T-cell (primary cell): ENCODE measurements at regions of chr1 and their contacts with region 1.

Region 1: GRCh38 chr1:225441314-225442122 is 13.7 kb upstream of the LBR start:
- DNase-seq: no peak
- ATAC-seq: no peak
- H3K4me3 ChIP-seq: peak overlapping the region in 1 of 2 donors; percentile 2
- H3K4me3 Mint-ChIP-seq: peak overlapping the region; percentile 4 to 62 (median 17)
- H3K27ac ChIP-seq: peak overlapping the region; percentile 56
- H3K27ac Mint-ChIP-seq: peak overlapping the region; percentile 87 to 93
- H3K4me1 ChIP-seq: peaks cover 20 to 53% of the 10 kb centered on the region in 2 experiments
- H3K4me1 Mint-ChIP-seq: peaks cover 52 to 58% (median 58%) of the 10 kb centered on the region in 3 donors
- H3K27me3 ChIP-seq: no peaks in the 10 kb centered on the region
- H3K27me3 Mint-ChIP-seq: no peaks in the 10 kb centered on the region

Region 2: DNA sequence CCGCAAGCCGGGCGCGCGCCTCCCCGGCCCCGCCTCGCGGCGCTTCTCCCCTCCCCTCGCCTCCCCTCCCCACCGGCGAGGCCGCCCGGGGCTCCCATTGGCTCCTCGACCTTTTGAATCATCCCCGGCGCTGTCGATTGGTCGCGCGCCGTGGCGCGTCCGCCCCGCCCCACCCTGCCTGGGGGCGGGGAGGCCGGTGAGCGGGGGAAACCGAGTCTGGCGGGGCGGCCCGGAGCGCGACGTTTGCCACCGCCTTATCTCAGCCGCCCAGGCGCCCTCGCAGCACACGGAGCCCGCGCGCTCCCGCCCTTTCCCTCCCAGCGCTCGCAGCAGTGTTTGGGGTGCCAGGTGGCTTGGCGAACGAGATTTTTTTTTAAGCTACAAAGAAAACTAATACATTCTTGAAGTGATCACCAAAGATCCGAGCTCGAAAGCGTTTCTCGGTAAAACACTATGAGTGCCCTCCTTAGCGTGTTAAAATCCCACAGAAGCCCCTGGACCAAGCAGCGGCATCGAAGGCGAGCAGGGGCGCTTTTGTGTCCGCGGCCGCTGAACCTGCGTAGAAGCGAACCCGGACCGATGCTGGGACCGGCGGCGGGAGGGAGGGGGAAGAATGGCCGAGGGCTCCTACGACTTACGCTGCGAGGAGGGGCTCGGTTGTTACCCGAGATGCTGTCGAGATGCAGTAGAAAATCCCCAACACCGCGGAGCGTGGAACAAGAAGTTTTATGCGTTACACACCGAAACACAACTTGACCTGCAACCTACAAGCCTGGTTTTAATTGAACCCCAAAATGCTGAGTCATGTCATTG is 13.2 kb before region 1 on chr1:
- CTCF ChIA-PET with region 1: interaction called, 9 to 43 read pairs
- POLR2A ChIA-PET with region 1: interaction called, 4 to 17 read pairs
- DNase-seq: peak; percentile 84 to 94 (median 88)
- ATAC-seq: peak; percentile 90 to 95 (median 92)
- H3K4me3 ChIP-seq: peak overlapping the region; percentile 87 to 96
- H3K4me3 Mint-ChIP-seq: peak overlapping the region; percentile 87 to 92 (median 90)
- H3K27ac ChIP-seq: peak overlapping the region; percentile 91
- H3K27ac Mint-ChIP-seq: peak overlapping the region; percentile 86 to 91
- H3K4me1 ChIP-seq: peaks cover 31 to 43% of the 10 kb centered on the region in 2 experiments
- H3K4me1 Mint-ChIP-seq: peaks cover 38 to 44% (median 43%) of the 10 kb centered on the region in 3 donors
- H3K27me3 ChIP-seq: no peaks in the 10 kb centered on the region
- H3K27me3 Mint-ChIP-seq: no peaks in the 10 kb centered on the region

Region 3: GRCh38 chr1:225460737-225461562 is 19.4 kb after region 1 on chr1:
- CTCF ChIA-PET with region 1: interaction called, 9 to 11 read pairs
- POLR2A ChIA-PET with region 1: interaction called in 1 of 2 experiments, 5 read pairs
- DNase-seq: peak in 32 of 35 experiments; percentile 33 to 77 (median 58)
- ATAC-seq: peak; percentile 82 to 91 (median 84)
- H3K4me3 ChIP-seq: no peak overlapping the region
- H3K4me3 Mint-ChIP-seq: peak overlapping the region in 1 of 3 donors; percentile 0
- H3K27ac ChIP-seq: peak overlapping the region; percentile 43
- H3K27ac Mint-ChIP-seq: peak overlapping the region; percentile 61 to 75
- H3K4me1 ChIP-seq: peaks cover 3 to 56% of the 10 kb centered on the region in 2 experiments
- H3K4me1 Mint-ChIP-seq: peaks cover 28 to 54% (median 45%) of the 10 kb centered on the region in 3 donors
- H3K27me3 ChIP-seq: no peaks in the 10 kb centered on the region
- H3K27me3 Mint-ChIP-seq: no peaks in the 10 kb centered on the region

Region 4: DNA sequence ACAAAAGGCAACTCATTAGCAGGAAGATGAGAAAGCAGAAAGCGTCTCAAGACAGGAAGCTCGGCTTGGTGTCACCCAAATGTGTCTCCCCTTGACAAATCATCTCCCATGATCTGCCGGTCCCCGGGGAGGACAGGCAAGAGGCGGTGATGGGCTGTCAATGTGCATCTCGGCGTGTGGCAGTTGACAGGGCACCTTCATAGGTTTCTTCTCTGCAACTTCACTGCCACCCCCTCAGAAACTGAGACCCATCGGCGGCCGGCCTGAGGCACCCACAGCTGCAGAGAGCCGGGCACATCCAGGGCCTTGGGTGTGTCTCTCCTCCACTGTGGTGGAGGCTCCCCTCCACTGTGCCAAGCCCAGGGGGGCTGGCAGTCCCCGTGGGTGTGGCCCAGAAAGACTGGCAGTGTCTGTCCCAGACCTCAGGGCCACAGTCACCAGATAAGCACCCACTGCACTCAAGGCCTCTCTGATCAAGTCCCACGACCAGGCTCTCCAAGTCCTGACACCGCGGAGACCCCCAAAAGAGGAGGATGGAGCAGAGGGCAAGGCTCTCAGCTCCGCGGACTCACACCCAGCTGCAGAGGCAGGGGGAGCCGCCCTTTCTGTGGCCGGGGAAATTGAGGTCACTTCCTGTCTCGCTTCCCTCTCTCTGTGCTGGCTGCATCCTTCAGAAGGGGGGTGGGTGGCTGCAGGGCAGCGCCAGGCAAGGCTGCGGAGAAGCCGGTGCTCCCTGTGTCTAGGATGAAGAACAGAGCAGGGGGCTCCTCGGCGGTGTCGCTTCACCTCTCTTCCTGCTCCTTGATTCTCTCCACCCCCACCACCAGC is 25.9 kb after region 1 on chr1:
- CTCF ChIA-PET with region 1: interaction called, 5 to 19 read pairs
- POLR2A ChIA-PET with region 1: interaction called in 1 of 2 experiments, 7 read pairs
- DNase-seq: peak; percentile 67 to 89 (median 80)
- ATAC-seq: peak; percentile 88 to 92 (median 92)
- H3K4me3 ChIP-seq: peak overlapping the region; percentile 81 to 86
- H3K4me3 Mint-ChIP-seq: peak overlapping the region; percentile 87 to 92 (median 90)
- H3K27ac ChIP-seq: peak overlapping the region; percentile 98
- H3K27ac Mint-ChIP-seq: peak overlapping the region; percentile 97
- H3K4me1 ChIP-seq: peaks cover 8 to 60% of the 10 kb centered on the region in 2 experiments
- H3K4me1 Mint-ChIP-seq: peaks cover 30 to 59% (median 53%) of the 10 kb centered on the region in 3 donors
- H3K27me3 ChIP-seq: no peaks in the 10 kb centered on the region
- H3K27me3 Mint-ChIP-seq: no peaks in the 10 kb centered on the region

Region 5: DNA sequence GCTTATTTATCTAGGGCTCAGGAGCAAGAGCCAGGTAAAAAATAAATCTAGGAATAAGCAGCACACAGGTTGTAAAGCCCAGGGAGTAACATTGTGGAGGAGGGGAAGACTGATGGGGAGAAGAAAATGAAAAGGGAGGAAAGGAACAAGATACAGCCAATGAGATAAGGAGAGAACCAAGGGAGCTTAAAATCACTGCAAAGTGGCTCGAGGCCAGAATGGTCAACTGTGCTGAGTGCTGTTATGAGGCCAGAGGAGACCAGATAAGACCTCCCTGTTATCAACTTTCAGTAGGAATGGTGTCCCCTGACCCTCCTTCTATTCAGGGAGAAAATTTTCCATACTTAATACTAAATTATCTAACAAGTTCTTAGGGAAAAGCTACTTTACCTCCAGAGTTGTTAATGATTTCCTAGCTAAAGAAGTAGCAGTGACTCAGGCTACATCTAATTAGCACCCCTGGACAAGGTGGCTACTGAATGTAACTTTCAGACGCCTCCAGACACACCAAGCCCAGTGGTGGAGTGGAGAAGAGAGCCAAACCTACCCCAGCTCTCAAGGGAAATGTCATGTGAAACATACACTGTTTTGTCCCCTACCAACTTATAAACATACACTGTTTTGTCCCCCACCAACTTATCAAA is 185.9 kb after region 1 on chr1:
- CTCF ChIA-PET with region 1: no interaction called
- POLR2A ChIA-PET with region 1: no interaction called
- DNase-seq: no peak
- ATAC-seq: no peak
- H3K4me3 ChIP-seq: no peak overlapping the region
- H3K4me3 Mint-ChIP-seq: no peak overlapping the region
- H3K27ac ChIP-seq: no peak overlapping the region
- H3K27ac Mint-ChIP-seq: no peak overlapping the region
- H3K4me1 ChIP-seq: no peaks in the 10 kb centered on the region
- H3K4me1 Mint-ChIP-seq: no peaks in the 10 kb centered on the region
- H3K27me3 ChIP-seq: peaks cover 0 to 16% of the 10 kb centered on the region in 2 experiments
- H3K27me3 Mint-ChIP-seq: peaks cover 16 to 32% of the 10 kb centered on the region in 2 donors

Region 6: DNA sequence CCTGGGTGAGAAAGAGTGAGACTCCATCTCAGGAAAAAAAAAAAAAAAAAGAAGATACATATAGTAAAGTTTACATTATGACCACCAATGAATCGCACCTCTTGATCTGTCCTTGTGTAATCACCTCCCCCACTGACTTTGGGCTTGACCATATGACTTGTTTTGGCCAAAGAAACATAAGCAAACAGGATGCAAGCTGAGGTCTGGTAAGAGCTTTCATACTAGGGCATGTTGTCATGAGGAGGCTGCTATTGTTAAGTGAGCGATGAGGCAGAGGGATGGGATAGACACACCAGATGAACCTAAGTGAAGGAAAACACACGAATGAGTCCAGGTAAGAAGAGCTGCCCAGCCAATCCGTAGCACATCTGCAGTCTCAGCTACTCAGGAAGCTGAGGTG is 200.7 kb after region 1 on chr1:
- CTCF ChIA-PET with region 1: no interaction called
- POLR2A ChIA-PET with region 1: no interaction called
- DNase-seq: no peak
- ATAC-seq: no peak
- H3K4me3 ChIP-seq: no peak overlapping the region
- H3K4me3 Mint-ChIP-seq: no peak overlapping the region
- H3K27ac ChIP-seq: no peak overlapping the region
- H3K27ac Mint-ChIP-seq: no peak overlapping the region
- H3K4me1 ChIP-seq: no peaks in the 10 kb centered on the region
- H3K4me1 Mint-ChIP-seq: no peaks in the 10 kb centered on the region
- H3K27me3 ChIP-seq: peaks cover 0 to 8% of the 10 kb centered on the region in 2 experiments
- H3K27me3 Mint-ChIP-seq: peaks cover 8 to 14% of the 10 kb centered on the region in 2 donors

Region 7: DNA sequence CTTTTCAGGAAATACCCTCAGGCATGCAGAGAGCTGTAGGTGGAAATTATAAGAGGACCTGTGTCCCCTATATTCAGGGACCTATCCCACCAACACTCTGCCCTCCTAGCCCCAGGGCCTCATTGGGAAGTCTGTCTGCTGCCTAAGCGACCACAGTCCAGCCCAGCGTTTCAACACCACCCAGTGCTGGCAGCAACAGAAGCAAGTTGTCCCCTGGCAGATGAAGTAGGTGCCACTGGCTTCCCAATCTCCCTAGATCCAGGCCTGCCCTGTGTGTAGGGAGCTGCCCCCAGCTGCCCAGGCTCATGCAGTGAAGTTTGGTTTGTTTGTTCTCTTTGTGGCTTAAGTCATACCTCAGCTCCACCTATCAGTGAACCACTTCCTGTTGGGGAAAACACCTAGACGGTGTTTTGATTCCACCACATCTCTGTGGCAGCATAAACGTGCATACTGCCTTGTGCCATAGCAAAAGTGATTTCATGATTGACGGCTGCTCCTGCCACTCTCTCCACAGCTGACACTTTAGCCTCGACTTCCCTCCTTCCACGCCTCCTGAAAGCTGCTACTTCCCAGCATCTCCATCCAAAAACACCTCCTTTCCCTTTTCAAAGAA is 455.5 kb after region 1 on chr1:
- CTCF ChIA-PET with region 1: no interaction called
- POLR2A ChIA-PET with region 1: interaction called in 1 of 2 experiments, 13 read pairs
- DNase-seq: peak; percentile 45 to 94 (median 71)
- ATAC-seq: peak; percentile 92 to 96 (median 94)
- H3K4me3 ChIP-seq: peak overlapping the region; percentile 15 to 51
- H3K4me3 Mint-ChIP-seq: peak overlapping the region; percentile 52 to 85 (median 63)
- H3K27ac ChIP-seq: peak overlapping the region; percentile 85
- H3K27ac Mint-ChIP-seq: peak overlapping the region; percentile 95 to 97
- H3K4me1 ChIP-seq: peaks cover 34 to 43% of the 10 kb centered on the region in 2 experiments
- H3K4me1 Mint-ChIP-seq: peaks cover 53 to 66% (median 56%) of the 10 kb centered on the region in 3 donors
- H3K27me3 ChIP-seq: no peaks in the 10 kb centered on the region
- H3K27me3 Mint-ChIP-seq: no peaks in the 10 kb centered on the region